Breast epithelium (tissue), 4 donors: ENCODE measurements at regions of chr13 and their contacts with region 1.

Region 1: GRCh38 chr13:44379885-44380284 is 6.3 kb downstream of the SERP2 start:
- DNase-seq: no peak
- H3K4me3 ChIP-seq: no peak overlapping the region
- H3K27ac ChIP-seq: no peak overlapping the region
- H3K4me1 ChIP-seq: no peaks in the 10 kb centered on the region
- H3K27me3 ChIP-seq: no peaks in the 10 kb centered on the region
- CTCF ChIP-seq: no peak
- POLR2A ChIP-seq: no peak

Region 2: GRCh38 chr13:44267966-44268365 is 111.9 kb before region 1 on chr13:
- intact Hi-C with region 1: loop called (anchors 2 kb)
- DNase-seq: no peak
- H3K4me3 ChIP-seq: no peak overlapping the region
- H3K27ac ChIP-seq: no peak overlapping the region
- H3K4me1 ChIP-seq: no peaks in the 10 kb centered on the region
- H3K27me3 ChIP-seq: no peaks in the 10 kb centered on the region
- CTCF ChIP-seq: no peak
- POLR2A ChIP-seq: no peak